Tibial artery (tissue), 4 donors: ENCODE measurements at regions of chr9 and their contacts with region 1.

Region 1: DNA sequence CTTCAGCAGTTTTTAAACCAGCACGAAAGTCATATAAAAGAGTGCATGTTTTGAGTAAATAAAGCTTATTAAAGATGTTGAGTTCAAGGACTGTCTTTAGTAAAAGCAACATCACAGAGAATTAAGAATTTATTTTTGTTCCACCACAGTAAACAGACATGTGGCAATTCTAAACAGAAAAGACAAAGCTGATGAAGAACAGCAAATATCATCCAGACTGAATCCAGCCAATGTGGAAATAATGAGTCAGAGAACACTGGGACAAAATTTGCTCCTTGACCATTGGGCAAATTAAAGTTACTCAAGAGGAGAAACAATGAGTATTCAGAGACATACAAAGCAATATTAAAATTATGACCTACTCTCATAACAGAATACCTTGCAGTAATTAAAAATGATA is 28.8 kb downstream of the OR2K2 start:
- DNase-seq: no peak
- H3K4me3 ChIP-seq: no peak overlapping the region
- H3K27ac ChIP-seq: no peak overlapping the region
- H3K4me1 ChIP-seq: peaks cover 0 to 16% (median 4%) of the 10 kb centered on the region in 4 donors
- H3K27me3 ChIP-seq: no peaks in the 10 kb centered on the region
- CTCF ChIP-seq: no peak

Region 2: GRCh38 chr9:110638381-110638954 is 662.7 kb before region 1 on chr9:
- intact Hi-C with region 1: loop called (anchors 5 kb)
- DNase-seq: no peak
- H3K4me3 ChIP-seq: no peak overlapping the region
- H3K27ac ChIP-seq: no peak overlapping the region
- H3K4me1 ChIP-seq: no peaks in the 10 kb centered on the region
- H3K27me3 ChIP-seq: no peaks in the 10 kb centered on the region
- CTCF ChIP-seq: peak; percentile 45 to 51

Region 3: GRCh38 chr9:111037381-111038305 is 263.6 kb before region 1 on chr9:
- intact Hi-C with region 1: loop called (anchors 10 kb)
- DNase-seq: peak; percentile 25 to 71
- H3K4me3 ChIP-seq: peak overlapping the region; percentile 84 to 94
- H3K27ac ChIP-seq: peak overlapping the region; percentile 93 to 94
- H3K4me1 ChIP-seq: peaks cover 0 to 58% (median 18%) of the 10 kb centered on the region in 4 donors
- H3K27me3 ChIP-seq: no peaks in the 10 kb centered on the region
- CTCF ChIP-seq: no peak

Region 4: GRCh38 chr9:111483862-111484571 is 182.8 kb after region 1 on chr9 and contains the start of gene ECPAS:
- intact Hi-C with region 1: no loop called
- DNase-seq: peak; percentile 72 to 86
- H3K4me3 ChIP-seq: peak within 1 kb of the TSS; percentile 76 to 95
- H3K27ac ChIP-seq: peak within 1 kb of the TSS; percentile 98 to 99
- H3K4me1 ChIP-seq: peaks cover 0 to 25% (median 15%) of the 10 kb centered on the region in 4 donors
- H3K27me3 ChIP-seq: no peaks in the 10 kb centered on the region
- CTCF ChIP-seq: peak in 1 of 2 experiments; percentile 2